Heart left ventricle (tissue), 16 donors: ENCODE measurements at regions of chr1 and their contacts with region 1.

Region 1: GRCh38 chr1:212291505-212292134 is 6.4 kb downstream of the PPP2R5A start:
- DNase-seq: no peak
- ATAC-seq: peak; percentile 56 to 81 (median 66)
- H3K4me3 ChIP-seq: peak overlapping the region in 1 of 12 donors; percentile 95
- H3K27ac ChIP-seq: peak overlapping the region in 1 of 12 donors; percentile 21
- H3K4me1 ChIP-seq: peaks cover 10 to 93% (median 72%) of the 10 kb centered on the region in 12 donors
- H3K27me3 ChIP-seq: no peaks in the 10 kb centered on the region
- CTCF ChIP-seq: peak; percentile 34 to 73 (median 60)
- POLR2A ChIP-seq: no peak

Region 2: DNA sequence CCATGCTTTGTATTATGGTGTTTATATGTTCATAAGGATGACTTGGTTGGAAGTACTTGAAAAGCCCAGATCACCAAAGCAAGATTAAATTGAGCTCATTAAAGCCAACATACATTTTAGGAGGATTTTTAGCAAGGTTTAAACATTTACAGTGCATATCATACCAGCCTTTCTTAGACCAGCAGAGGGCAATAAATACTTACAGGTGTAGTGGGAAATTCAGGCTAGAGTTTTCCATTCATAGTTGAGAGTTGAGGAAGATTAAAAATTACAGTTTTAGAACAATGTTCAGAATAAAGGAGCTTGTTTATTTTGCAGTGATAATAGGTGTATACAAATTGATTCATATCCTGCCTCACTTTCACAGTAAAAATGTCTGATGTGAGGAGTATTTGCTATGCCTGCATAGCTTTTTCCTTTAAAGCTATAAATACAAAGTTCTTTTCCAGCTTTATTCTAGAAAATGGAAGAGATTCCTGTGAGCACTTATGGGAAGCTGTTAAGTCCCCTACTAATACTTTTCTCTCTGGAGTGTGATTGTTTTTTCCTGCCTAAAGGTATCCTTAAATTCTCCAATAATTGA is 220.8 kb before region 1 on chr1:
- intact Hi-C with region 1: loop called in 9 of 10 experiments (anchors 1 to 5 kb)
- DNase-seq: no peak
- ATAC-seq: peak in 3 of 4 donors; percentile 48 to 61 (median 57)
- H3K4me3 ChIP-seq: no peak overlapping the region
- H3K27ac ChIP-seq: peak overlapping the region in 2 of 12 donors; percentile 2 to 33
- H3K4me1 ChIP-seq: peaks cover 0 to 12% (median 0%) of the 10 kb centered on the region in 12 donors
- H3K27me3 ChIP-seq: no peaks in the 10 kb centered on the region
- CTCF ChIP-seq: peak; percentile 69 to 89 (median 80)
- POLR2A ChIP-seq: no peak

Region 3: GRCh38 chr1:212077051-212077450 is 214.6 kb before region 1 on chr1:
- intact Hi-C with region 1: loop called in 5 of 10 experiments (anchors 2 to 5 kb)
- DNase-seq: no peak
- ATAC-seq: no peak
- H3K4me3 ChIP-seq: no peak overlapping the region
- H3K27ac ChIP-seq: peak overlapping the region in 1 of 12 donors; percentile 52
- H3K4me1 ChIP-seq: peaks cover 0 to 10% (median 0%) of the 10 kb centered on the region in 12 donors
- H3K27me3 ChIP-seq: no peaks in the 10 kb centered on the region
- CTCF ChIP-seq: no peak
- POLR2A ChIP-seq: no peak

Region 4: DNA sequence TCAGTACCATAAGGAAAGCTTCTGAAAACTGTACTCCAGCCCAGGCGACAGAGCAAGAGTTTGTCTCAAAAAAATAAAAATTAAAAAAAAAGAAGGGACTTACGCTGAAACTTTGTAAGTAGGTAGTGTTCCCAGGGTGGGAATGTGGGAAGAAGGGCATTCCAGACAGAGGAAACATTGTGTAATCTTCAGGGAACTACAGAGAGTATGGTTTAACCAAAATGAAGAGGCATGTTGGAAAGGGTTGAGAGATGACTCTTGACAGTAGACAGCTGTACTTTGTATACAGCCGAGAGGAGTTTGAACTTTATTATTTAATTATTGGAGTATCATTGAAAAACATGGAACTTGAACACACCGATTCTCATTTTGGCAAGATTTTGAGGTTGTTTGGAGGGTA is 36.6 kb after region 1 on chr1:
- intact Hi-C with region 1: loop called in 1 of 10 experiments (anchors 5 kb)
- DNase-seq: no peak
- ATAC-seq: peak in 1 of 4 donors; percentile 69
- H3K4me3 ChIP-seq: no peak overlapping the region
- H3K27ac ChIP-seq: no peak overlapping the region
- H3K4me1 ChIP-seq: peaks cover 0 to 23% (median 6%) of the 10 kb centered on the region in 12 donors
- H3K27me3 ChIP-seq: no peaks in the 10 kb centered on the region
- CTCF ChIP-seq: no peak
- POLR2A ChIP-seq: no peak

Region 5: GRCh38 chr1:212368073-212368484 is 76.5 kb after region 1 on chr1:
- intact Hi-C with region 1: loop called in 8 of 10 experiments (anchors 2 to 10 kb)
- DNase-seq: peak in 3 of 5 donors; percentile 33 to 51 (median 35)
- ATAC-seq: peak; percentile 45 to 88 (median 84)
- H3K4me3 ChIP-seq: no peak overlapping the region
- H3K27ac ChIP-seq: peak overlapping the region in 1 of 12 donors; percentile 2
- H3K4me1 ChIP-seq: peaks cover 0 to 23% (median 1%) of the 10 kb centered on the region in 12 donors
- H3K27me3 ChIP-seq: no peaks in the 10 kb centered on the region
- CTCF ChIP-seq: peak; percentile 76 to 91 (median 83)
- POLR2A ChIP-seq: no peak